ENCODE measurements at regions of chr4 and their contacts with region 1.

Region 1: GRCh38 chr4:21790438-21791029 is 158.0 kb downstream of the KCNIP4 start:
- DNase-seq: peak; percentile 30
- H3K4me3 ChIP-seq: no peak overlapping the region
- H3K27ac ChIP-seq: no peak overlapping the region
- H3K4me1 ChIP-seq: peaks cover 5% of the 10 kb centered on the region
- H3K27me3 ChIP-seq: peaks cover 2% of the 10 kb centered on the region
- CTCF ChIP-seq: peak; percentile 11 to 45

Region 2: GRCh38 chr4:21879187-21879586 is 88.7 kb after region 1 on chr4:
- CTCF ChIA-PET with region 1: no interaction called
- dilution Hi-C with region 1: no loop called
- in situ Hi-C with region 1: no loop called
- intact Hi-C with region 1: loop called (anchors 5 kb)
- DNase-seq: no peak
- H3K4me3 ChIP-seq: no peak overlapping the region
- H3K27ac ChIP-seq: no peak overlapping the region
- H3K4me1 ChIP-seq: peaks cover 12% of the 10 kb centered on the region
- H3K27me3 ChIP-seq: no peaks in the 10 kb centered on the region
- CTCF ChIP-seq: peak in 1 of 2 donors; percentile 2

Region 3: GRCh38 chr4:22129454-22130029 is 339.0 kb after region 1 on chr4:
- CTCF ChIA-PET with region 1: no interaction called
- dilution Hi-C with region 1: no loop called
- in situ Hi-C with region 1: no loop called
- intact Hi-C with region 1: loop called (anchors 2 kb)
- DNase-seq: peak; percentile 41
- H3K4me3 ChIP-seq: no peak overlapping the region
- H3K27ac ChIP-seq: no peak overlapping the region
- H3K4me1 ChIP-seq: no peaks in the 10 kb centered on the region
- H3K27me3 ChIP-seq: no peaks in the 10 kb centered on the region
- CTCF ChIP-seq: peak; percentile 80 to 82

Region 4: GRCh38 chr4:22356987-22357596 is 566.6 kb after region 1 on chr4:
- CTCF ChIA-PET with region 1: no interaction called
- dilution Hi-C with region 1: no loop called
- in situ Hi-C with region 1: no loop called
- intact Hi-C with region 1: loop called (anchors 1 kb)
- DNase-seq: peak; percentile 26
- H3K4me3 ChIP-seq: no peak overlapping the region
- H3K27ac ChIP-seq: no peak overlapping the region
- H3K4me1 ChIP-seq: no peaks in the 10 kb centered on the region
- H3K27me3 ChIP-seq: no peaks in the 10 kb centered on the region
- CTCF ChIP-seq: peak; percentile 35 to 70

Region 5: GRCh38 chr4:22607382-22607781 is 816.8 kb after region 1 on chr4:
- CTCF ChIA-PET with region 1: interaction called, 6 read pairs
- dilution Hi-C with region 1: no loop called
- in situ Hi-C with region 1: no loop called
- intact Hi-C with region 1: loop called (anchors 2 kb)
- DNase-seq: peak; percentile 35
- H3K4me3 ChIP-seq: no peak overlapping the region
- H3K27ac ChIP-seq: no peak overlapping the region
- H3K4me1 ChIP-seq: no peaks in the 10 kb centered on the region
- H3K27me3 ChIP-seq: no peaks in the 10 kb centered on the region
- CTCF ChIP-seq: peak; percentile 68 to 89

Measured in mammary epithelial cell (primary cell).